Endothelial cell of umbilical vein (primary cell): ENCODE measurements at regions of chr1 and their contacts with region 1.

Region 1: GRCh38 chr1:114511032-114511785 is at the start of gene TRIM33:
- DNase-seq: peak; percentile 96
- H3K4me3 ChIP-seq: peak within 1 kb of the TSS; percentile 67 to 95 (median 95)
- H3K27ac ChIP-seq: peak within 1 kb of the TSS; percentile 80
- H3K4me1 ChIP-seq: peaks cover 21% of the 10 kb centered on the region
- H3K27me3 ChIP-seq: peaks cover 0 to 5% of the 10 kb centered on the region in 2 experiments
- CTCF ChIP-seq: no peak
- POLR2A ChIP-seq: peak; percentile 90
- total RNA-seq, gene TRIM33: 29.1 and 29.7 TPM in 2 replicates

Region 2: GRCh38 chr1:113701429-113701828 is 809.8 kb before region 1 on chr1:
- CTCF ChIA-PET with region 1: no interaction called
- POLR2A ChIA-PET with region 1: no interaction called
- dilution Hi-C with region 1: no loop called
- intact Hi-C with region 1: no loop called
- DNase-seq: peak; percentile 6
- H3K4me3 ChIP-seq: no peak overlapping the region
- H3K27ac ChIP-seq: no peak overlapping the region
- H3K4me1 ChIP-seq: no peaks in the 10 kb centered on the region
- H3K27me3 ChIP-seq: no peaks in the 10 kb centered on the region
- CTCF ChIP-seq: no peak
- POLR2A ChIP-seq: no peak

Region 3: GRCh38 chr1:113811888-113812660 is 699.1 kb before region 1 on chr1 and contains the start of gene RSBN1:
- CTCF ChIA-PET with region 1: no interaction called
- POLR2A ChIA-PET with region 1: no interaction called
- dilution Hi-C with region 1: no loop called
- intact Hi-C with region 1: loop called (anchors 5 kb)
- DNase-seq: peak; percentile 100
- H3K4me3 ChIP-seq: peak within 1 kb of the TSS; percentile 65 to 97 (median 74)
- H3K27ac ChIP-seq: peak within 1 kb of the TSS; percentile 81
- H3K4me1 ChIP-seq: peaks cover 26% of the 10 kb centered on the region
- H3K27me3 ChIP-seq: no peaks in the 10 kb centered on the region
- CTCF ChIP-seq: peak in 1 of 2 donors; percentile 8
- POLR2A ChIP-seq: peak; percentile 89
- total RNA-seq, gene RSBN1: 10.8 and 13.4 TPM in 2 replicates

Region 4: GRCh38 chr1:114437812-114438211 is 73.4 kb before region 1 on chr1:
- CTCF ChIA-PET with region 1: no interaction called
- POLR2A ChIA-PET with region 1: no interaction called
- dilution Hi-C with region 1: no loop called
- intact Hi-C with region 1: loop called (anchors 2 kb)
- DNase-seq: no peak
- H3K4me3 ChIP-seq: no peak overlapping the region
- H3K27ac ChIP-seq: no peak overlapping the region
- H3K4me1 ChIP-seq: peaks cover 16% of the 10 kb centered on the region
- H3K27me3 ChIP-seq: no peaks in the 10 kb centered on the region
- CTCF ChIP-seq: no peak
- POLR2A ChIP-seq: no peak

Region 5: GRCh38 chr1:114446198-114446597 is 65.0 kb before region 1 on chr1:
- CTCF ChIA-PET with region 1: interaction called, 5 read pairs
- POLR2A ChIA-PET with region 1: no interaction called
- dilution Hi-C with region 1: no loop called
- intact Hi-C with region 1: loop called (anchors 2 kb)
- DNase-seq: no peak
- H3K4me3 ChIP-seq: no peak overlapping the region
- H3K27ac ChIP-seq: no peak overlapping the region
- H3K4me1 ChIP-seq: peaks cover 24% of the 10 kb centered on the region
- H3K27me3 ChIP-seq: no peaks in the 10 kb centered on the region
- CTCF ChIP-seq: no peak
- POLR2A ChIP-seq: no peak

Region 6: GRCh38 chr1:114581335-114582287 is 70.4 kb after region 1 on chr1 and contains the start of gene BCAS2:
- CTCF ChIA-PET with region 1: no interaction called
- POLR2A ChIA-PET with region 1: no interaction called
- dilution Hi-C with region 1: no loop called
- intact Hi-C with region 1: loop called (anchors 1 kb)
- DNase-seq: peak; percentile 98
- H3K4me3 ChIP-seq: peak within 1 kb of the TSS; percentile 66 to 96 (median 85)
- H3K27ac ChIP-seq: peak within 1 kb of the TSS; percentile 68
- H3K4me1 ChIP-seq: peaks cover 7% of the 10 kb centered on the region
- H3K27me3 ChIP-seq: no peaks in the 10 kb centered on the region
- CTCF ChIP-seq: no peak
- POLR2A ChIP-seq: peak; percentile 93
- total RNA-seq, gene BCAS2: 41.7 and 43.5 TPM in 2 replicates

Region 7: GRCh38 chr1:114670083-114671010 is 159.1 kb after region 1 on chr1:
- CTCF ChIA-PET with region 1: no interaction called
- POLR2A ChIA-PET with region 1: no interaction called
- dilution Hi-C with region 1: no loop called
- intact Hi-C with region 1: loop called (anchors 2 kb)
- DNase-seq: peak; percentile 91
- H3K4me3 ChIP-seq: peak overlapping the region in 2 of 3 experiments; percentile 49 to 62
- H3K27ac ChIP-seq: no peak overlapping the region
- H3K4me1 ChIP-seq: peaks cover 11% of the 10 kb centered on the region
- H3K27me3 ChIP-seq: peaks cover 10 to 17% of the 10 kb centered on the region in 2 experiments
- CTCF ChIP-seq: no peak
- POLR2A ChIP-seq: no peak

Region 8: GRCh38 chr1:114757455-114758250 is 246.4 kb after region 1 on chr1 and contains the start of gene CSDE1:
- CTCF ChIA-PET with region 1: no interaction called
- POLR2A ChIA-PET with region 1: no interaction called
- dilution Hi-C with region 1: no loop called
- intact Hi-C with region 1: loop called (anchors 5 kb)
- DNase-seq: peak; percentile 99
- H3K4me3 ChIP-seq: peak within 1 kb of the TSS; percentile 75 to 93 (median 91)
- H3K27ac ChIP-seq: peak within 1 kb of the TSS; percentile 98
- H3K4me1 ChIP-seq: peaks cover 28% of the 10 kb centered on the region
- H3K27me3 ChIP-seq: no peaks in the 10 kb centered on the region
- CTCF ChIP-seq: peak; percentile 31 to 36
- POLR2A ChIP-seq: peak; percentile 91
- total RNA-seq, gene CSDE1: 486 and 492 TPM in 2 replicates